ENCODE measurements at regions of chr4 and their contacts with region 1.

Region 1: GRCh38 chr4:112082954-112083586 is 62.2 kb upstream of the FAM241A start:
- DNase-seq: peak; percentile 99
- H3K4me3 ChIP-seq: no peak overlapping the region
- H3K27ac ChIP-seq: peak overlapping the region; percentile 95
- H3K4me1 ChIP-seq: peaks cover 41% of the 10 kb centered on the region
- H3K27me3 ChIP-seq: no peaks in the 10 kb centered on the region
- CTCF ChIP-seq: no peak
- POLR2A ChIP-seq: peak; percentile 76

Region 2: DNA sequence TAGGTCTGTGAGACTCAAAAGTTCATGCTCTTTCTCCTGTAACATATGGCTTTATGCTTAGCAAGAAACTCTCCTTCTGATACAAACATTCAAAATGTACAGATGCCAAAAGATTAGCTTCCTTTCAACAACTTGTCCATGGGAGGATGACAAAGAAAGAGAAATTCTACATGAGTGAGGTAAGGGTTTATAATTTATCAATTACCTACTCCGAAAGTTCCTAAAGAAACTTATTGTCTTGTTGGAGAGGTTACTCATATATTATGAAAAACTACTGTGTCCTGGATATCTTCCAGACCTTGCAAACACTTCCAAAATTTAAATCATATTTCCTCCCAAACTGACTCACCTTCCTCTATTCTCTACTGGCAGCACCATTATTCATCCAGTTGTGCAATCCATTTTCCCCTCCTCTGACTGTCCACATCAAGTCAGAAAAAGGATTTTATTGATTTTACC is 1542.1 kb before region 1 on chr4:
- CTCF ChIA-PET with region 1: no interaction called
- POLR2A ChIA-PET with region 1: no interaction called
- dilution Hi-C with region 1: no loop called
- intact Hi-C with region 1: loop called (anchors 1 kb)
- DNase-seq: peak; percentile 94
- H3K4me3 ChIP-seq: peak overlapping the region in 1 of 3 experiments; percentile 23
- H3K27ac ChIP-seq: peak overlapping the region; percentile 99
- H3K4me1 ChIP-seq: peaks cover 25% of the 10 kb centered on the region
- H3K27me3 ChIP-seq: no peaks in the 10 kb centered on the region
- CTCF ChIP-seq: no peak
- POLR2A ChIP-seq: no peak

Region 3: GRCh38 chr4:111678479-111678878 is 404.6 kb before region 1 on chr4:
- CTCF ChIA-PET with region 1: no interaction called
- POLR2A ChIA-PET with region 1: no interaction called
- dilution Hi-C with region 1: no loop called
- intact Hi-C with region 1: loop called (anchors 1 kb)
- DNase-seq: peak; percentile 84
- H3K4me3 ChIP-seq: no peak overlapping the region
- H3K27ac ChIP-seq: peak overlapping the region; percentile 79
- H3K4me1 ChIP-seq: peaks cover 20% of the 10 kb centered on the region
- H3K27me3 ChIP-seq: no peaks in the 10 kb centered on the region
- CTCF ChIP-seq: no peak
- POLR2A ChIP-seq: no peak

Region 4: DNA sequence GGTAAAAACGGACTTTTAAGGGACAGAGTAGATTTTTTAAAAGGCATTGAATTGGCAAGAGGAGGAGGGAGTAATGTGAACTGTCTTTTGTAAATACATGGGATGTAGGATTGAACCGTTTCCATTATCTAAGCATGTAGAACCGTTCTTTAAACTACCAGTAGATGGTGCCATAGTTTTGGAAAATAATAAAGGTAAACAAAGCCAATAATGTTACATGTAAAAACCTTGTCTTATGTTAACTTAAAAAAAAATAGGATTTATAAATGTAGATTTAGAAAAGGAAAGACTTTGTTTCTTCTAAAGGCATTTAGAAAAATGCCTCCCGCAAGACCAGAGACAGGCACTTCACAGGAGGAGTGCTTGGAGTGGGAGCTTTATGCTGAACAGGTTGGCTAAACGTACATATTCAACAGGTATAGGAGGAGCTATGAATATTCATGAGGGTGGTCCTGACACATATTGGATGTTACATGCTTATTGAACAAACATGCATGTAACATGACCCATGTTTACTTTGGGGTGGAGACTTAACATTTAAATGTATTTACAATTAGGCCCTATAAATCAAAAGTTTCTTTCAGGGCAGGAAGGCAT is 16.7 kb after region 1 on chr4:
- CTCF ChIA-PET with region 1: interaction called, 20 read pairs
- POLR2A ChIA-PET with region 1: no interaction called
- dilution Hi-C with region 1: no loop called
- intact Hi-C with region 1: loop called (anchors 1 kb)
- DNase-seq: peak; percentile 80
- H3K4me3 ChIP-seq: no peak overlapping the region
- H3K27ac ChIP-seq: no peak overlapping the region
- H3K4me1 ChIP-seq: peaks cover 10% of the 10 kb centered on the region
- H3K27me3 ChIP-seq: no peaks in the 10 kb centered on the region
- CTCF ChIP-seq: peak; percentile 28 to 45
- POLR2A ChIP-seq: no peak

Region 5: GRCh38 chr4:112145326-112145819 is 62.3 kb after region 1 on chr4 and contains the start of gene FAM241A:
- CTCF ChIA-PET with region 1: no interaction called
- POLR2A ChIA-PET with region 1: no interaction called
- dilution Hi-C with region 1: no loop called
- intact Hi-C with region 1: loop called (anchors 2 kb)
- DNase-seq: peak; percentile 81
- H3K4me3 ChIP-seq: peak within 1 kb of the TSS; percentile 88 to 96 (median 91)
- H3K27ac ChIP-seq: peak within 1 kb of the TSS; percentile 77
- H3K4me1 ChIP-seq: peaks cover 24% of the 10 kb centered on the region
- H3K27me3 ChIP-seq: no peaks in the 10 kb centered on the region
- CTCF ChIP-seq: no peak
- POLR2A ChIP-seq: peak; percentile 92
- total RNA-seq, gene FAM241A: 8.3 and 9.1 TPM in 2 replicates

Region 6: DNA sequence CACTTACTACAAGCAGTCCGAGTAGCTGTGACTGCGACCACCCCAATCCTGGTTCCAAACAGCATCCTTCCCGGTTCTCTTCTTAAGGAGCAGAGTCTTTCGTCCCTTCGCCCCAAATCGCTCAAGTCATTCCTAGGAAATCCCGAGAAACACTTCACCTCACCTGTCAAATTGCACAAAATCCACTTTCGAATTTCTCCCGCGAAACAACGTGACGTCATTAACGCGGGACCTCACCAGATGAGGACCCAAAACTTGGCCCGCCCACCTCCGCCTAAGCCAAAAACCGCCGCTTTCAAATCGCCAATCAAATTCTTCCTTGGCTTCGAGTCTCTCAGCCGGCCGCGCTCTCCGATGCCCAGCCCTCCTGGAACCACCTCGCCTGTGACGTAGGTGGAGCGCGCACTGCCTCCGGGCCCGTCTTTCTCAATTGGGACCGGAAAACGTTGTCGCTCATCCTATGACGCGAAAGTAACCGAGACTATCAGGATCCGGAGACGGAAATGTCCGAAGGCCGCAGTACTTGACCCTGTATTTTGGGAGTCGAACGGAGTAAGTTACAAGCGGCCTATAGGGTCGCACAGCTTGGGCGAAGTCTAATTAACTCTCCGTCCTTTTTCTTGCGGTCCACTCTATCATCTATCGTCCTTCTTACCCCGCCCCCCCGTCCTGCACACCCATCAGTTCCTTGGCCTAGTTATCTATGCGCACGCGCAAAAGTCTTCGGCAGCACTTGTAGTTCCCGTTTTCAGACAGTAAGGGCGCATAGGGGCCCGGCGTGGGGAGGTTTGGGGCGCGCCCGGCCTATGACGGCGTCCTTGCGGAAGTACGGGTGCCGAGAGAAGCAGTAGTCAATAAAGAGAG is 553.9 kb after region 1 on chr4 and contains the starts of genes LARP7 and ZGRF1:
- CTCF ChIA-PET with region 1: no interaction called
- POLR2A ChIA-PET with region 1: no interaction called
- dilution Hi-C with region 1: no loop called
- intact Hi-C with region 1: loop called (anchors 1 kb)
- DNase-seq: peak; percentile 99
- H3K4me3 ChIP-seq: peak within 1 kb of the TSS; percentile 85 to 97 (median 96)
- H3K27ac ChIP-seq: peak within 1 kb of the TSS; percentile 91
- H3K4me1 ChIP-seq: peaks cover 16% of the 10 kb centered on the region
- H3K27me3 ChIP-seq: no peaks in the 10 kb centered on the region
- CTCF ChIP-seq: peak; percentile 84 to 88
- POLR2A ChIP-seq: no peak
- total RNA-seq, gene LARP7: 30.8 and 35.1 TPM in 2 replicates
- total RNA-seq, gene ZGRF1: 14.0 and 14.4 TPM in 2 replicates